IMR-90 (cell line): ENCODE measurements at regions of chr10 and their contacts with region 1.

Region 1: DNA sequence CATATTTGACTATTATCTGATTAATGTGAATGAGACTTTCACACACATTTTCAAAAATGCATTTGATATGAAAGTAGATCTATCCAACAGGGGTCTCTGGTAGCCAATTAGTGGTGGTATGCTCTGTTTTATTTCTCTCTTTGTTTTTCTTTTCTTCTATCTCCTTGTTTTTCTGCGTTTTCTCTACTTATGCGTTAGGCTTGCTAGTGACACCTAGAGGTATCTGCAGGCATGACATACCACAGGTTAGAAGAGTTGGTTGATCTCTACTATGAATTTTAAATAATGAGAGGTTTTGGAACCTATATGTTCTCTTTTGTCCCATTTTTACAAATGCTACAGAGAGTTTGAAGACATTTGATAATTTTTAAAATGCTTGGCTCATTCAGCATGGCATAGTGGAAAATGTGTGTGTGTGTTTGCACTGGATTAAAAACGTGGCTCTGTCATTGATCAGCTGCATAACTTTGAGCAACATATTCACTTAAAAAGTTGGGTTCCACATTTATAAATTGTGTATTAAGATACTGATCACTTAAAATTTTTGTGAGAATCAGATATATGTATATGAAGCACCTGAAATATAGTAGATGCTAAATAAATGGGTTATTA is 28.1 kb upstream of the PLXDC2 start:
- DNase-seq: peak; percentile 73
- ATAC-seq: peak; percentile 75; the same call in 1 of the 2 replicates
- H3K4me3 ChIP-seq: no peak overlapping the region
- H3K27ac ChIP-seq: no peak overlapping the region
- H3K4me1 ChIP-seq: no peaks in the 10 kb centered on the region
- H3K27me3 ChIP-seq: no peaks in the 10 kb centered on the region
- CTCF ChIP-seq: peak; percentile 79
- POLR2A ChIP-seq: no peak
- RAD21 ChIP-seq: peak; percentile 73

Region 2: GRCh38 chr10:18689498-18689897 is 1098.7 kb before region 1 on chr10:
- CTCF ChIA-PET with region 1: no interaction called
- POLR2A ChIA-PET with region 1: no interaction called
- dilution Hi-C with region 1: no loop called
- in situ Hi-C with region 1: loop called (anchors 25 kb)
- intact Hi-C with region 1: no loop called
- DNase-seq: peak; percentile 65
- ATAC-seq: peak; percentile 87
- H3K4me3 ChIP-seq: no peak overlapping the region
- H3K27ac ChIP-seq: no peak overlapping the region
- H3K4me1 ChIP-seq: no peaks in the 10 kb centered on the region; the same call in 1 of the 2 replicates
- H3K27me3 ChIP-seq: no peaks in the 10 kb centered on the region
- CTCF ChIP-seq: peak; percentile 70
- POLR2A ChIP-seq: no peak
- RAD21 ChIP-seq: peak; percentile 76

Region 3: GRCh38 chr10:19629567-19629966 is 158.6 kb before region 1 on chr10:
- CTCF ChIA-PET with region 1: interaction called, 6 read pairs
- POLR2A ChIA-PET with region 1: no interaction called
- dilution Hi-C with region 1: no loop called
- in situ Hi-C with region 1: loop called (anchors 10 kb)
- intact Hi-C with region 1: loop called (anchors 1 kb)
- DNase-seq: peak; percentile 67
- ATAC-seq: peak; percentile 97
- H3K4me3 ChIP-seq: no peak overlapping the region
- H3K27ac ChIP-seq: no peak overlapping the region
- H3K4me1 ChIP-seq: peaks cover 5% of the 10 kb centered on the region
- H3K27me3 ChIP-seq: no peaks in the 10 kb centered on the region
- CTCF ChIP-seq: peak; percentile 39
- POLR2A ChIP-seq: no peak
- RAD21 ChIP-seq: no peak